ENCODE measurements at regions of chr6 and their contacts with region 1.

Region 1: DNA sequence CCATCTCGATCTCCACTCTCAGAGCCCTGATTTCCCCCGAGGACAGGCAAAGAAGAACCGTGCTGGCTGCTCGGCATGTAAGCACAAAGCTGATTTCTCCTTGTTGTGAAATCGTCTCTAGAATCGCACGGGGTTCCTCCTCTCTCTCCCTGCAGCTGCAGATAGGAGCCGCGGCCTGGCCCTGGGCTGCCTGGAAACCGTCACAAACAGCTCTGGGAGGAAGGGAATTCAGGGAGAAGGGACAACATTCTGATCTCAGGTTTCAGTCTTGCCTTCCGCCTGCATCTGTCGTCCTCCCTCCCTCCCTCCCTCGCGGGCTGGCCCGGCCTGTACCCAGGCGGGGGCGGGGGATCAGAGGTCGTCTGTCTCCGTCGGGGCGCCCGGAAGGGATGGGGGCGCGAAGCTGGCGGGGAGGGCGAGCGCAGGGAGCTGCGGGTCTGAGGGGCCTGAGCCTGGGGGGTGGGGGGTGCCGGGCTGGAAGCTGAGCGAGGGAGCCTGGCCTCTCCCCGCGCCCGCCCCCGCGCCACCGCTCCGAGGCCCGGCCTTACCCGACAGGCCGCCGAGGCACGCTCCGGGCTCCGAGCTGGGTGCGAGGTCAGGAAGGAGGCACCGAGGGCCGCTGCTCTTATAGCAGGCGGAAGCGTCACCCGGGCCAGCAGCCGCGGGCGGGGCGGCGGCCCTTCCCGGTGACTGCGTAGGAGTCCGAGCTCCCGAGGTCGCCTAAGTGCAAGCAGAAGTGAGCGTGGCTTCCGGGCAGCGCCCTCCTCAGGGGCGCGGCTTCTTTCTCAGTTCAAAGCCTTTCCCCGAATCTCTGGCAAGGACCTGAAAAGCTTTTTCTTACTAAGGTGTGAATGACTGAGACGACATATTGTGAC is at the start of gene SERPINB1:
- DNase-seq: peak; percentile 97
- ATAC-seq: peak; percentile 88
- H3K4me3 ChIP-seq: peak within 1 kb of the TSS; percentile 66 to 86 (median 75)
- H3K27ac ChIP-seq: peak within 1 kb of the TSS; percentile 97
- H3K4me1 ChIP-seq: peaks cover 71% of the 10 kb centered on the region
- H3K27me3 ChIP-seq: no peaks in the 10 kb centered on the region
- CTCF ChIP-seq: peak; percentile 64
- EP300 ChIP-seq: peak; percentile 70 to 77
- POLR2A ChIP-seq: peak; percentile 64 to 83
- RAD21 ChIP-seq: peak; percentile 49
- total RNA-seq, gene SERPINB1: 41.4 and 60.1 TPM in 2 replicates

Region 2: GRCh38 chr6:2765166-2765895 is 76.2 kb before region 1 on chr6 and contains the start of gene WRNIP1:
- CTCF ChIA-PET with region 1: no interaction called
- POLR2A ChIA-PET with region 1: interaction called, 36 read pairs
- in situ Hi-C with region 1: no loop called
- intact Hi-C with region 1: loop called (anchors 2 kb)
- DNase-seq: peak; percentile 99
- ATAC-seq: peak; percentile 94
- H3K4me3 ChIP-seq: peak within 1 kb of the TSS; percentile 77 to 95 (median 85)
- H3K27ac ChIP-seq: peak within 1 kb of the TSS; percentile 92
- H3K4me1 ChIP-seq: peaks cover 42% of the 10 kb centered on the region
- H3K27me3 ChIP-seq: no peaks in the 10 kb centered on the region; a peak in 2 of 5 replicates
- CTCF ChIP-seq: peak; percentile 82
- EP300 ChIP-seq: peak; percentile 1 to 25; a peak in 2 of 4 replicates
- POLR2A ChIP-seq: peak in 1 of 2 experiments; percentile 69; a peak in 2 of 4 replicates
- RAD21 ChIP-seq: peak; percentile 81
- total RNA-seq, gene WRNIP1: 88.9 and 90.3 TPM in 2 replicates

Region 3: GRCh38 chr6:2807342-2808090 is 34.0 kb before region 1 on chr6:
- CTCF ChIA-PET with region 1: no interaction called
- POLR2A ChIA-PET with region 1: interaction called, 7 read pairs
- in situ Hi-C with region 1: no loop called
- intact Hi-C with region 1: loop called (anchors 2 kb)
- DNase-seq: no peak
- ATAC-seq: no peak
- H3K4me3 ChIP-seq: no peak overlapping the region
- H3K27ac ChIP-seq: no peak overlapping the region
- H3K4me1 ChIP-seq: peaks cover 49% of the 10 kb centered on the region
- H3K27me3 ChIP-seq: no peaks in the 10 kb centered on the region
- CTCF ChIP-seq: no peak
- EP300 ChIP-seq: no peak
- POLR2A ChIP-seq: no peak
- RAD21 ChIP-seq: no peak

Region 4: DNA sequence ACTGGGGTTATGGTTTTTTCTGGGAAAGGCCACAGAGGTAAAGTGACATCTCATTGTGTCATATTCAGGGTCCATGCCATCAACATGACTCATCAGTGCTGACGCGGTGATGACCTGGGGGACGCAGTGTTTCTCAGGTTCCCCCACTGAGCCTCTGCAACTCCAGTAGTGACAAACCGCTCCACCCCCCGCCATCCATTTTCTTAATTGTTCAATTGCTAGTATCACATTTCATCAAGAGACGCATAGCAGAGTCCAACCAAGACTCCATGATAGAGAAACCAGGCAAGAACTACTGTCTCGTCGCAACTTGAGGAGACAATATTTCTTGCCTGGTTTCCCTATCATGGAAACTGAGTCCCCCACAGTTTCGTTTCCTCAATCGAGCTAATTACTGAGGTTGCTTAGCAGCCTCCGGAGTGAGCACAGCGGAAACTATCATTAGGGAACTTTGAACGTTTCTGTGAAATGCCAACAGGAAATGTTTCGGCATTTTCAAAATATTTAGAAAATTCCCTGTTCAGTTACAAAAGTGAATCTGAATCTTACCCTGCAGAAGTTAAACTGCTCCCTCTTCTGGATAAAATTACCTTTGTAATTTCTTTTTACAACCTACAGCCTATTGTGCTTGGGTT is 12.4 kb after region 1 on chr6:
- CTCF ChIA-PET with region 1: no interaction called
- POLR2A ChIA-PET with region 1: interaction called, 38 read pairs
- in situ Hi-C with region 1: no loop called
- intact Hi-C with region 1: no loop called
- DNase-seq: peak; percentile 75
- ATAC-seq: peak; percentile 47
- H3K4me3 ChIP-seq: peak overlapping the region; percentile 51 to 60 (median 53)
- H3K27ac ChIP-seq: peak overlapping the region; percentile 65
- H3K4me1 ChIP-seq: peaks cover 91% of the 10 kb centered on the region
- H3K27me3 ChIP-seq: no peaks in the 10 kb centered on the region
- CTCF ChIP-seq: peak; percentile 53; the same call in 1 of the 2 replicates
- EP300 ChIP-seq: peak in 1 of 2 experiments; percentile 8; a peak in 1 of 4 replicates
- POLR2A ChIP-seq: 0 out of 4 replicates have a peak, but pooled peaks of 1 of the 2 experiments have one; percentile 22
- RAD21 ChIP-seq: no peak; the same call in 1 of the 2 replicates

Region 5: DNA sequence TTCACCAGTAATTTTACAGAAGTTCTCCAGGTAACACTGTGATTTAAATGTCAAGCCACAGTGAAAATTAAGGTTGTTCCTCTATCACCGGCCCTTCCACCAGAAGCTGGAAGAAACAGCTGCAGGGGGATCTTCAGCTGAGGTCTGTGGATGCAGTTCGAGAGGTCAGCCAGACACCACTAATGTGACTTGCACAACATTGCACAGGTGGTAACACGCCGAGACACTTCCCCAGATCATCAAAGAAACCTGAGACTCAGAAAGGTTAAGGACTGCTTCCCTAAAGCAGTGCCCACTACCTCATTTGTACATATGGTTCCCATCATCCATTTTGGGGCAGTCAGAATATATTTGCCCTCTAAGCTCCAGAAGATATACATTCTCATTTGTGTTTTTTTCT is 69.7 kb after region 1 on chr6:
- CTCF ChIA-PET with region 1: interaction called, 39 read pairs
- POLR2A ChIA-PET with region 1: interaction called, 6 read pairs
- in situ Hi-C with region 1: loop called (anchors 5 kb)
- intact Hi-C with region 1: loop called (anchors 1 kb)
- DNase-seq: no peak
- ATAC-seq: no peak
- H3K4me3 ChIP-seq: no peak overlapping the region
- H3K27ac ChIP-seq: no peak overlapping the region
- H3K4me1 ChIP-seq: peaks cover 35% of the 10 kb centered on the region
- H3K27me3 ChIP-seq: peaks cover 0 to 20% of the 10 kb centered on the region in 2 experiments; a peak in 4 of 5 replicates
- CTCF ChIP-seq: no peak
- EP300 ChIP-seq: no peak
- POLR2A ChIP-seq: no peak
- RAD21 ChIP-seq: no peak

Region 6: DNA sequence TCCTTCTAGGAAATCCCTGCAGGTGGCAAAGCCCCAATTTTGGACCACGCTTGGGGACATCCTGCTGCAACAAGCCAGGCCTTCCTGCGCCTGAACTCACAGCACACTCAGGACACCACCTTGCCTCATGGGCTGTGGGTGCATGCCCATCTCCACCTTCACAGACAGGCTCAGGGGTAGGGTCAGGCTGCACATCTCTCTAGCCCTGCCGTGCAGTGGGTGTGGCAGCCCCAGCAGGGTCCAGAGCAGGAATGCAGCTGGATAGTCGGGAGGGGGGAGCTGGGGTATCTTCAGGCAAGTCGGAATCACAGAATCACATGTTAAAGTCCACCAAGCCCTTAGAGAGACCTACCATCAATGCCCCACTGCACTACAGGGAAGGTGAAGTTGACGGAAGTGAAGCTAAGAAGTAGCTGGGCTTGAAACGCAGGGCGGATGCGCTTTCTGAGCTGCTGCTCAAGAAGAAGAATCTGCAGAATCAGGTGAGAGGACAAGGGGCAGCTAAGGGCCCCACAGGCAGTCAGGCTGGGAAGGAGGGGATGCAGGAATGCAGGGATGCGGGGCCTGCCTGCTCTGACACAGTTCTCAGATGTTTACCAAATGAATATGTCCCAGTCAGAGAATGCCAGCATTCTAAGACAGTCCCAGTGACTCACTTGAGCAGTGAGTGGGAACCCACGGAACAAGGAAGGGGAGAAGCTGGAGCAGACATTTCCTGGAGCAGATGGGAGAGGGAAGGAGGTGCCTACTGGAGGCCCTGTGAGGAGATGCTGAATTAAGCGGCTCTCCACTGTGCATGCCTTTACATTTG is 118.6 kb after region 1 on chr6:
- CTCF ChIA-PET with region 1: no interaction called
- POLR2A ChIA-PET with region 1: no interaction called
- in situ Hi-C with region 1: no loop called
- intact Hi-C with region 1: no loop called
- DNase-seq: no peak
- ATAC-seq: no peak
- H3K4me3 ChIP-seq: no peak overlapping the region
- H3K27ac ChIP-seq: no peak overlapping the region
- H3K4me1 ChIP-seq: peaks cover 45% of the 10 kb centered on the region
- H3K27me3 ChIP-seq: no peaks in the 10 kb centered on the region
- CTCF ChIP-seq: no peak
- EP300 ChIP-seq: no peak
- POLR2A ChIP-seq: no peak
- RAD21 ChIP-seq: no peak

Region 7: DNA sequence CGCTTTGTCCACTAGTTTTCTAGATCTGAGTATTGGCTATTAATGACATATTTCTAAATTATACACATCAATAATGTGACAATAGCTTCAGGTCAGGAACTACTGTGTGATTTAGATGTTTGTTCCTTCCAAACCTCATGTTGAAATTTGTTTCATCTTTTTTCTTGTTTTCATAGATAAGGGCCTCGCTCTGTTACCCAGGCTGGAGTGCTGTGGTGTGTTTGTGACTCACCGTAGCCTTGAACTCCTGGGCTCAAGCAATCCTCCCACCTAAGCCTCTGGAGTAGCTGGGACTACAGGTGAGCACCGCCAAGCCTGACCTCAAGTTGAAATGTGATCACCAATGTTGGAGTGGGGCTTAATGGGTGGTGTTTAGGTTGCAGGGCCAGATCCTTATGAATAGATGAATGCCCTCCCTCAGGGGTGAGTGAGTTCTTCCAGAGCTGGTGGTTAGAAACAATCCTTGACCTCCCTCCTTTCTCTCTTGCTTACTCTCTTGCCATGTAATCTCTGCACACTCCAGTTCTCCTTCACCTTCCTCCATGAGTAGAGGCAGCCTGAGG is 152.3 kb after region 1 on chr6:
- CTCF ChIA-PET with region 1: interaction called, 3 read pairs
- POLR2A ChIA-PET with region 1: interaction called, 61 read pairs
- in situ Hi-C with region 1: no loop called
- intact Hi-C with region 1: loop called (anchors 2 kb)
- DNase-seq: peak; percentile 93
- ATAC-seq: peak; percentile 31
- H3K4me3 ChIP-seq: peak overlapping the region in 1 of 3 experiments; percentile 11; a peak in 1 of 6 replicates
- H3K27ac ChIP-seq: peak overlapping the region; percentile 22
- H3K4me1 ChIP-seq: peaks cover 53% of the 10 kb centered on the region
- H3K27me3 ChIP-seq: no peaks in the 10 kb centered on the region; a peak in 1 of 5 replicates
- CTCF ChIP-seq: peak; percentile 17; the same call in 1 of the 2 replicates
- EP300 ChIP-seq: peak in 1 of 2 experiments; percentile 94; a peak in 2 of 4 replicates
- POLR2A ChIP-seq: no peak
- RAD21 ChIP-seq: no peak

Region 8: GRCh38 chr6:3068329-3069214 is 227.1 kb after region 1 on chr6 and contains the start of gene RIPK1:
- CTCF ChIA-PET with region 1: no interaction called
- POLR2A ChIA-PET with region 1: interaction called, 17 read pairs
- in situ Hi-C with region 1: no loop called
- intact Hi-C with region 1: no loop called
- DNase-seq: peak; percentile 89
- ATAC-seq: peak; percentile 82
- H3K4me3 ChIP-seq: peak within 1 kb of the TSS; percentile 92 to 99 (median 97)
- H3K27ac ChIP-seq: peak within 1 kb of the TSS; percentile 99
- H3K4me1 ChIP-seq: peaks cover 54% of the 10 kb centered on the region
- H3K27me3 ChIP-seq: no peaks in the 10 kb centered on the region; a peak in 1 of 5 replicates
- CTCF ChIP-seq: peak; percentile 80
- EP300 ChIP-seq: no peak; a peak in 1 of 4 replicates
- POLR2A ChIP-seq: peak; percentile 76 to 94
- RAD21 ChIP-seq: peak; percentile 70
- total RNA-seq, gene RIPK1: 10.3 and 15.0 TPM in 2 replicates

Measured in HepG2 (cell line).